ENCODE measurements at regions of chr2 and their contacts with region 1.

Region 1: GRCh38 chr2:201780674-201781581 is at the start of gene ALS2:
- DNase-seq: peak; percentile 99
- ATAC-seq: peak; percentile 95
- H3K4me3 ChIP-seq: peak within 1 kb of the TSS; percentile 66 to 95 (median 93)
- H3K27ac ChIP-seq: peak within 1 kb of the TSS; percentile 72
- H3K4me1 ChIP-seq: peaks cover 44% of the 10 kb centered on the region
- H3K27me3 ChIP-seq: no peaks in the 10 kb centered on the region; a peak in 1 of 5 replicates
- CTCF ChIP-seq: 0 out of 2 replicates have a peak, but pooled peaks have one; percentile 4
- EP300 ChIP-seq: peak in 1 of 2 experiments; percentile 77; a peak in 2 of 4 replicates
- POLR2A ChIP-seq: peak; percentile 83 to 93
- RAD21 ChIP-seq: peak; percentile 53
- total RNA-seq, gene ALS2: 19.3 and 25.4 TPM in 2 replicates

Region 2: GRCh38 chr2:201600906-201601305 is 180.0 kb before region 1 on chr2:
- CTCF ChIA-PET with region 1: no interaction called
- POLR2A ChIA-PET with region 1: no interaction called
- in situ Hi-C with region 1: no loop called
- intact Hi-C with region 1: no loop called
- DNase-seq: no peak
- ATAC-seq: no peak
- H3K4me3 ChIP-seq: no peak overlapping the region
- H3K27ac ChIP-seq: no peak overlapping the region
- H3K4me1 ChIP-seq: no peaks in the 10 kb centered on the region
- H3K27me3 ChIP-seq: peaks cover 0 to 3% of the 10 kb centered on the region in 2 experiments; a peak in 2 of 5 replicates
- CTCF ChIP-seq: no peak
- EP300 ChIP-seq: no peak
- POLR2A ChIP-seq: no peak
- RAD21 ChIP-seq: no peak

Region 3: DNA sequence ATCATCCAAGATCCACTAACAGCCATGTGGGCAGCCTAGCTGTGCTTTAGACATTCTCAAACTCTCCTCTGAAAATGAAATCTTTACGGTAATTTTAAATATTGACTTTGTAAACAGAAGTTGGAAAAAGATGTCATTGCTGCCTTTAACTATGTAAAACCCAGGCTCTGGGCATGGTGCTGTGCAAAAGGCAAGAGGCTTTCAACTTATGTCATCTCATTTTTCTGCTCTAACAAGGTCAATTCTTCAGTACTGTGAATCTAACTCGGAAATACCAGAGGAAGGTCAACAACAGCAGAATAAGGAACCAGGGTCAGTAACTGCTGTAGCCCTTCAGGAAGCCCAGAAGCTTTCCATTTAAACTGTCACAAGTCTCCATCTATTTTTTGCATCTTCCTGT is 45.4 kb before region 1 on chr2:
- CTCF ChIA-PET with region 1: no interaction called
- POLR2A ChIA-PET with region 1: no interaction called
- in situ Hi-C with region 1: no loop called
- intact Hi-C with region 1: loop called (anchors 1 kb)
- DNase-seq: peak; percentile 80
- ATAC-seq: peak; percentile 97
- H3K4me3 ChIP-seq: no peak overlapping the region
- H3K27ac ChIP-seq: peak overlapping the region; percentile 14
- H3K4me1 ChIP-seq: peaks cover 13% of the 10 kb centered on the region
- H3K27me3 ChIP-seq: no peaks in the 10 kb centered on the region
- CTCF ChIP-seq: no peak
- EP300 ChIP-seq: no peak
- POLR2A ChIP-seq: no peak
- RAD21 ChIP-seq: no peak

Region 4: GRCh38 chr2:201758234-201758633 is 22.7 kb before region 1 on chr2:
- CTCF ChIA-PET with region 1: no interaction called
- POLR2A ChIA-PET with region 1: interaction called, 33 read pairs
- in situ Hi-C with region 1: no loop called
- intact Hi-C with region 1: loop called (anchors 2 kb)
- DNase-seq: peak; percentile 70
- ATAC-seq: peak; percentile 89
- H3K4me3 ChIP-seq: peak overlapping the region in 2 of 3 experiments; percentile 23 to 34; a peak in 3 of 6 replicates
- H3K27ac ChIP-seq: peak overlapping the region; percentile 14
- H3K4me1 ChIP-seq: peaks cover 46% of the 10 kb centered on the region
- H3K27me3 ChIP-seq: no peaks in the 10 kb centered on the region
- CTCF ChIP-seq: no peak
- EP300 ChIP-seq: no peak; a peak in 1 of 4 replicates
- POLR2A ChIP-seq: no peak
- RAD21 ChIP-seq: no peak

Region 5: GRCh38 chr2:201768918-201769317 is 12.0 kb before region 1 on chr2:
- CTCF ChIA-PET with region 1: no interaction called
- POLR2A ChIA-PET with region 1: interaction called, 11 read pairs
- in situ Hi-C with region 1: no loop called
- intact Hi-C with region 1: no loop called
- DNase-seq: no peak
- ATAC-seq: no peak
- H3K4me3 ChIP-seq: no peak overlapping the region
- H3K27ac ChIP-seq: no peak overlapping the region
- H3K4me1 ChIP-seq: no peaks in the 10 kb centered on the region
- H3K27me3 ChIP-seq: no peaks in the 10 kb centered on the region
- CTCF ChIP-seq: no peak
- EP300 ChIP-seq: no peak
- POLR2A ChIP-seq: no peak
- RAD21 ChIP-seq: no peak

Measured in HepG2 (cell line).